Breast epithelium (tissue), 4 donors: ENCODE measurements at regions of chr2 and their contacts with region 1.

Region 1: GRCh38 chr2:114039677-114040076 is 149.8 kb downstream of the ACTR3 start:
- DNase-seq: no peak
- H3K4me3 ChIP-seq: no peak overlapping the region
- H3K27ac ChIP-seq: no peak overlapping the region
- H3K4me1 ChIP-seq: no peaks in the 10 kb centered on the region
- H3K27me3 ChIP-seq: no peaks in the 10 kb centered on the region
- CTCF ChIP-seq: no peak
- POLR2A ChIP-seq: no peak

Region 2: GRCh38 chr2:114079366-114080004 is 39.8 kb after region 1 on chr2:
- intact Hi-C with region 1: loop called (anchors 2 kb)
- DNase-seq: no peak
- H3K4me3 ChIP-seq: no peak overlapping the region
- H3K27ac ChIP-seq: no peak overlapping the region
- H3K4me1 ChIP-seq: no peaks in the 10 kb centered on the region
- H3K27me3 ChIP-seq: no peaks in the 10 kb centered on the region
- CTCF ChIP-seq: no peak
- POLR2A ChIP-seq: no peak

Region 3: DNA sequence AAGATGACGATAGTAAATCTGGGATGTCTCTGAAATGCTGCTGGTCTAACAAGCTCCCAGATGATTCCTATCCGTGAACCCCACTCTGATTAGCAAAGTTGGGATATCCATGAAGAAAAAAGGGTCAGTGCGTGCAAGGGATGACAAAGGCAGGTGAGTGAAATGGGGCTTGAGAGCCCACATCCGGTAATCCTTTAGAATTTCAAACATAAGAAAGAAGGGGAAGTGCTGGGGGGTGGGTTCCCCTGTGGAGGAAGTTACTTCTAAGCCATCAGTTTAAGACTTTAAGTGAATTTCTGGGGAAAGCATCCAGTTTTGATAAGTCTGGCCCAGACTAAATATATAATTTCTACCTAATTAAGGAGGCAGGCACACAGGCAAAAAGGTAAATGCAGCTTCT is 612.3 kb after region 1 on chr2:
- intact Hi-C with region 1: no loop called
- DNase-seq: no peak
- H3K4me3 ChIP-seq: no peak overlapping the region
- H3K27ac ChIP-seq: no peak overlapping the region
- H3K4me1 ChIP-seq: no peaks in the 10 kb centered on the region
- H3K27me3 ChIP-seq: no peaks in the 10 kb centered on the region
- CTCF ChIP-seq: no peak
- POLR2A ChIP-seq: no peak

Region 4: DNA sequence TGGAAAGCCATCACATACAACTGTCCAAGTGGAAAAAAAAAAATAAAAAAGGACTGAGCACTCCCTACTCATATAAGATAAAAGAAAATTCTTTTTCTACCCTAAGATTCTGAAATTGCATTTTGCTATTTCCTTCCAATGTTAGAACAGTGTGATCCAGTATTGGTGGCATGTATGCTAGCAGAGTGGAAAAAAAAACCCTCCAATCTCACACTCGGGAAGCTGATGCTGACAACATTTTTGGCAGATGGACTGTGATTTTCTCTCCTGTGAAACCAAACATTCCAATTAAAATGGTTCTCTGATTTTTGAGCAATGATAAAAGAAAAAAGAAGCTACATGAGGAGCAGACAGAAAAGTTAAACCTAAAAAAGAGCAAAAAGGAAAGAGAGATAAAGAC is 822.6 kb after region 1 on chr2:
- intact Hi-C with region 1: no loop called
- DNase-seq: no peak
- H3K4me3 ChIP-seq: no peak overlapping the region
- H3K27ac ChIP-seq: no peak overlapping the region
- H3K4me1 ChIP-seq: no peaks in the 10 kb centered on the region
- H3K27me3 ChIP-seq: no peaks in the 10 kb centered on the region
- CTCF ChIP-seq: no peak
- POLR2A ChIP-seq: no peak

Region 5: GRCh38 chr2:115075800-115076199 is 1036.1 kb after region 1 on chr2:
- intact Hi-C with region 1: no loop called
- DNase-seq: no peak
- H3K4me3 ChIP-seq: no peak overlapping the region
- H3K27ac ChIP-seq: no peak overlapping the region
- H3K4me1 ChIP-seq: no peaks in the 10 kb centered on the region
- H3K27me3 ChIP-seq: no peaks in the 10 kb centered on the region
- CTCF ChIP-seq: no peak
- POLR2A ChIP-seq: no peak